ENCODE measurements at regions of chr3 and their contacts with region 1.

Region 1: DNA sequence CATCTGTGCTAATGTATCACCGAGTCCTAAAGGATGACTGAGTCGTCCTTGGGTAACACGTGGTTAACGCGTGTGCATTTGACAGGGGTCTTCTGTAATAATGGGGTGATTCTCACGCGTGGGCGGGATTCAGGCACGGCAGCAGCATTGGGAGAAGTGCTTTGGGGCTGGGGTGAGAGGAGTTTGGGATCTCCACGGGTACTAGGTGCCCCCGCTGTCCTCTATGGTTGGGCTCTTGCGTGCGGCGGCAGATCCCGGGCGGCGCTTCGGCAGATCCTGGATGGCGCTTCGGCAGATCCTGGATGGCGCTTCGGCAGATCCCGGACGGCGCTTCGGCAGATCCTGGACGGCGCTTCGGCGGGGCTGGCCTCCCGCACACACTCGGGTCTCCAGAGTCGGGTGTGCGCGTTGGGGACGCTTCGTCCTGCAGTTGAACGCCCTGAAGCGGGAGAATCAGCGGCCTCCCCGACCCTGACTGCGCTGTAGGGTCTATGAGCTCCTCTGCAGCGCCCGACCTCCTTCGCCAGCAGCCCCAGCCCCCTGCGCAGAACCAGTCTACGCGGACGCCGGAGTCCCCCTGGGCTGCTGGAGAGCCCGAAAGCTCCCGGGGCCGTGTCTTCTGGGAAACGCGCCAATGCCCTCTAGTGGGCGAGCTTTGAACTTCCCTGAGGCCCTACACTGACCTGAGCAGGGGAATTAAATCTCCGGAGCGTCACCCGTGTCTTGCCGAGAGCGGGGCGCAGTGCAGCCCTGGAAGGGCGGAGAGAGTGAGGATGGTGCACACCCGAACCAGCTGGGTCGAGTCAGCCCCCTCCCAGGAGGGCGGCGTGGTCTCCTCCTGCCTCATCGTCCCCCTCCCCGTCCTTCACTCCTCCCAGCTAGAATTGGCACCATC is 48.1 kb upstream of the EPHB3 start:
- DNase-seq: peak; percentile 95
- H3K4me3 Mint-ChIP-seq: peak overlapping the region; percentile 72
- H3K27ac Mint-ChIP-seq: no peak overlapping the region
- H3K4me1 Mint-ChIP-seq: peaks cover 8% of the 10 kb centered on the region
- H3K27me3 Mint-ChIP-seq: peaks cover 79% of the 10 kb centered on the region

Region 2: DNA sequence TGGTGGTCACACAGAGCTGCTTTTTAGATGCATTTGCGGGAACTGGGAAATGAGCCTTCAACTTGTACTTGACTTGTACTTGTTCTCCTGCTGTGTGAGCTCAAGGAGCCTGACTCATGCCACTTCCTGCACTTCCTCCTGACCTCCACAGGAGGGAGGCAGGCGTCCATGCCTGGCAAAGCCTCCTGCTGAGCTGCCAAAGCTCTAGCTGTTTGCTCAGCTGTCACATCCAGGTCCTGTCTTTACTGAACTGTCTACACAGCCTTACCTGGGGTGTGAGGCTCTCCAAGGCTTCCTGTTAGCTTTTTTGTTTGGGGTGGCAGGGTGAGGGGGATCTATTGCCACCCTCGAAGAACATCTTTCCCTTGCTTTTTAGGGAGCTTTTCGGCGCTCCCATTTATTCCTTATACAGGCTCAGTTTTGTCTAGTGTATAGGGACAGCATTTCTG is 141.9 kb before region 1 on chr3:
- intact Hi-C with region 1: loop called (anchors 2 kb)
- DNase-seq: peak; percentile 89
- H3K4me3 Mint-ChIP-seq: no peak overlapping the region
- H3K27ac Mint-ChIP-seq: no peak overlapping the region
- H3K4me1 Mint-ChIP-seq: peaks cover 20% of the 10 kb centered on the region
- H3K27me3 Mint-ChIP-seq: peaks cover 19% of the 10 kb centered on the region

Region 3: DNA sequence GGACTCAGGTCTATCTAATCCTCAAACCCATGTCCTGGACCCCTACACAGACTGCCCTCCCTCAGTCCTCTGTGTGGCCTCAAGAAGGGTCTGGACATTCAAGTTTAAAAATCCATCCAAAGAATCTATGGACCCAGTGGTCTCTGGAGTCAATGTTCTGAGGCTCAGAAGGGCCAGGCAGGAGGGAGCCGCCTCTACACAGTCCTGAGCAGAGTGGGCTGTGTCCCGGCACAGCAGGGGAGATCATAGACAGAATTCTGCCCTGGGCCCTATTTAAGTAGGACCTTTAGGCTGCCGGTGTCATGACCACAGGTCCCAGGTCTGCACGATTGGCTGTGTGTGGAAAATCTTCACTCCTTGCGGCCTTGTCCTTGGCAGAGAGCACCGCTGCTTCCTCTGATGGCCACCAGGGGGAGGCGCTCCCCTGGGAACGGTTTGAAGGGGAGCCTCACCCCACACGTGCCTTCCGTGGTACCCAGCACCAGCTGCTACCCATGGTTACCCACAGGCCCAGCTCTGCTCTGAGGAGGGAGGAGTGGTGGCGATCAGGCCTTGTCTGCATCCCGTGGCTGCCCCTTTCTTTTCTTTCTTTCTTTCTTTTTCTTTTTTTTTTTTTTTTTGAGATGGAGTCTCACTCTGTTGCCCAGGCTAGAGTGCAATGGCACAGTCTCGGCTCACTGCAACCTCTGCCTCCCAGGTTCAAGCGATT is 95.8 kb before region 1 on chr3:
- intact Hi-C with region 1: loop called (anchors 1 kb)
- DNase-seq: peak; percentile 89
- H3K4me3 Mint-ChIP-seq: no peak overlapping the region
- H3K27ac Mint-ChIP-seq: no peak overlapping the region
- H3K4me1 Mint-ChIP-seq: no peaks in the 10 kb centered on the region
- H3K27me3 Mint-ChIP-seq: peaks cover 3% of the 10 kb centered on the region

Region 4: GRCh38 chr3:184479426-184480126 is 33.9 kb before region 1 on chr3:
- intact Hi-C with region 1: loop called (anchors 5 kb)
- DNase-seq: no peak
- H3K4me3 Mint-ChIP-seq: no peak overlapping the region
- H3K27ac Mint-ChIP-seq: no peak overlapping the region
- H3K4me1 Mint-ChIP-seq: no peaks in the 10 kb centered on the region
- H3K27me3 Mint-ChIP-seq: peaks cover 23% of the 10 kb centered on the region

Measured in activated CD4-positive, alpha-beta T cell treated with anti-CD3 and anti-CD28 coated beads, Interleukin-2, amount 10 ng/mL, durations not matched to agents 24 days and 14 days (primary cell).